ENCODE measurements at regions of chr2 and their contacts with region 1.

Region 1: DNA sequence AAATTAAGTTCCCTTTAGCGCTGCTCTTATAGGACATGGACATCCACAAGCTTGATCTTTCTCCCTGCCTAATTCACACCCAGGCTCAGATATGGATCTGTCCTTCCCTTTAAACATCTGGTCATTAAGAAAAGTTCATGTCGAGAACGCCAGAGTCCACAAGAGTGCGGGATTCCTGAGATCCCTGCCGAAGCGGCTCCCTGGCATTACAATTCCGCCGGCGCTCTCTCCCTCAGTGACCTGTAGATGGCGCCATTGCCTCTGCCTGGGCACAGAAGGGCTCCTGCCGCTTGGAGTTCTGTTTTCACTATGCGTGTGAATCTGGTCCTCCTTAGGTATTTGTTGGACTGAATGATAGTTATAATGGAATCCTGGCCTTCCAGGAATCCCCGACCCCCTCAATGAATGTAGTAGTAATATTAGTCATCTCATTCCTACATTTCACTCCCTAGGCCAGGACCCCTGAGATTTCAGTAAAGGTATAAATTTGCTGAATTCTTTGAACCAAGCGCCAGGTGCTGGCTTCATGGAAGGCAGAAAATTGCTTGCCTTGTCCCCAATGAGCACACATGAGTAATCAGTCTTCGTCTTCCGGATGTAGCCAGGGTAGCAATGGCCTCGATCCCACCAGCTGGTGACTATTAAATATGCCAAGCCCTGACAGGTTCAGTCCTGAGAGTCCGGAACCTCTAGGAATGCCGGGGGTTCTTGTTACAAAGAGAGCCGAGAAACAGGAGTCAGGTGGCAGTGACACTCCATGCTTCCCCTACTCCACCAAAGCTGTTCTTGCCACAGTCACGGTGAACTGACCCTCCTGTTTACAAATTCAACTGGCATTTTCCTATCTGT is 26.4 kb upstream of the CD207 start:
- DNase-seq: peak; percentile 77 to 82
- H3K4me3 ChIP-seq: no peak overlapping the region
- H3K27ac ChIP-seq: no peak overlapping the region
- H3K4me1 ChIP-seq: no peaks in the 10 kb centered on the region
- H3K27me3 ChIP-seq: no peaks in the 10 kb centered on the region
- CTCF ChIP-seq: peak; percentile 71 to 95 (median 86)
- POLR2A ChIP-seq: no peak

Region 2: DNA sequence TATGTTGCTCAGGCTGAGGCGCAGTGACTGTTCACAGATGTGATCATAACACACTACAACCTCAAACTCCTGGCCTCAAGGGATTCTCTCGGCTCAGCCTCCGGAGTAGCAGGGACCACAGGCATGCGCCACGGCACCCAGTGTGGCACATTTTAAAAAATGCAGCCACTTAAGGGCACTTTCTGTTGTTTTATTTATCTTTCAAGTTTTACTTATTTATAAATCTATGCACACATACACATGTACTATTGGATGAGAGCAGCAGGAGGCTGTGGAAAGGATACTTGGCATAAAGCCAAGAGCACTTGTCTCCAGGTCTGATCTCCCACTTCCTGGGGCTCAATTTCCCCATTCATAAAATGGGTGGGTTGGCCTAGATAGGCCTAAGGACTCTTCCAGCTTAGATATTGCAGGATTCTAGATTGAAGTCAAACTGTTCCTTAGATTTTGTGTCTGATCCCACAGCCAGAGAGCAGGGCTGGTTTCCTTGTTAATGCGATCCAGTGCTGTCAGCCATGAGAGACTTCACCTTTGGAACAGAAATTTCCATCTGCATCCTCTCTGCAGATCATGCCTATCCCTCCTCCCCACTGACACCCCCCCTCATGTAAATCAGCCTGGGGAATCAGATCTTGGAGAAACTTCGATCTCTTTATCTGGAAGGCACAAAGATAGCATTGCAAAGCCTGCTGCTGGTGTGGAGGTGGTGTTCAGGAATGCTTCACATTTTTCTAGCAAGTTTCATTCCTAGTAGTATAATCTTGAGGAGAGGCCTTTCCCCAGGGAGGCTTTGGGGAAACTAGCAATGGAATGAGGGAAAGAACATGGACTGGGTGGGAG is 750.0 kb before region 1 on chr2:
- intact Hi-C with region 1: no loop called
- DNase-seq: no peak
- H3K4me3 ChIP-seq: no peak overlapping the region
- H3K27ac ChIP-seq: no peak overlapping the region
- H3K4me1 ChIP-seq: peaks cover 3 to 48% of the 10 kb centered on the region in 2 donors
- H3K27me3 ChIP-seq: no peaks in the 10 kb centered on the region
- CTCF ChIP-seq: no peak
- POLR2A ChIP-seq: no peak

Region 3: GRCh38 chr2:70946832-70947442 is 84.9 kb after region 1 on chr2:
- intact Hi-C with region 1: loop called (anchors 2 kb)
- DNase-seq: peak; percentile 49 to 59
- H3K4me3 ChIP-seq: no peak overlapping the region
- H3K27ac ChIP-seq: no peak overlapping the region
- H3K4me1 ChIP-seq: peaks cover 0 to 6% of the 10 kb centered on the region in 2 donors
- H3K27me3 ChIP-seq: no peaks in the 10 kb centered on the region
- CTCF ChIP-seq: peak; percentile 44 to 73 (median 62)
- POLR2A ChIP-seq: no peak